ENCODE measurements at regions of chr17 and their contacts with region 1.

Region 1: GRCh38 chr17:17280613-17281549 is at the start of gene COPS3:
- DNase-seq: peak; percentile 89 to 98 (median 95)
- ATAC-seq: peak; percentile 93
- H3K4me3 ChIP-seq: peak within 1 kb of the TSS; percentile 67
- H3K4me3 Mint-ChIP-seq: peak within 1 kb of the TSS; percentile 87 to 98 (median 94)
- H3K27ac ChIP-seq: peak within 1 kb of the TSS; percentile 95
- H3K27ac Mint-ChIP-seq: peak within 1 kb of the TSS; percentile 91 to 98 (median 94)
- H3K4me1 ChIP-seq: peaks cover 17 to 24% of the 10 kb centered on the region in 2 donors
- H3K4me1 Mint-ChIP-seq: peaks cover 22 to 48% (median 44%) of the 10 kb centered on the region in 7 donors
- H3K27me3 ChIP-seq: no peaks in the 10 kb centered on the region
- H3K27me3 Mint-ChIP-seq: peaks cover 0 to 4% (median 0%) of the 10 kb centered on the region in 5 donors
- total RNA-seq, gene COPS3: 44.7 to 98.7 (median 69.4) TPM

Region 2: GRCh38 chr17:16438557-16439302 is 842.2 kb before region 1 on chr17:
- CTCF ChIA-PET with region 1: no interaction called
- POLR2A ChIA-PET with region 1: no interaction called
- intact Hi-C with region 1: loop called in 1 of 2 experiments (anchors 10 kb)
- DNase-seq: peak; percentile 81 to 97 (median 95)
- ATAC-seq: peak; percentile 93
- H3K4me3 ChIP-seq: peak overlapping the region; percentile 89
- H3K4me3 Mint-ChIP-seq: peak overlapping the region; percentile 91 to 100 (median 100)
- H3K27ac ChIP-seq: peak overlapping the region; percentile 92
- H3K27ac Mint-ChIP-seq: peak overlapping the region; percentile 91 to 100 (median 99)
- H3K4me1 ChIP-seq: peaks cover 27 to 41% of the 10 kb centered on the region in 2 donors
- H3K4me1 Mint-ChIP-seq: peaks cover 30 to 55% (median 47%) of the 10 kb centered on the region in 7 donors
- H3K27me3 ChIP-seq: no peaks in the 10 kb centered on the region
- H3K27me3 Mint-ChIP-seq: no peaks in the 10 kb centered on the region

Region 3: GRCh38 chr17:17168401-17168800 is 112.5 kb before region 1 on chr17:
- CTCF ChIA-PET with region 1: no interaction called
- POLR2A ChIA-PET with region 1: no interaction called
- intact Hi-C with region 1: no loop called
- DNase-seq: no peak
- ATAC-seq: no peak
- H3K4me3 ChIP-seq: no peak overlapping the region
- H3K4me3 Mint-ChIP-seq: no peak overlapping the region
- H3K27ac ChIP-seq: no peak overlapping the region
- H3K27ac Mint-ChIP-seq: peak overlapping the region in 7 of 9 donors; percentile 46 to 83 (median 55)
- H3K4me1 ChIP-seq: peaks cover 12 to 28% of the 10 kb centered on the region in 2 donors
- H3K4me1 Mint-ChIP-seq: peaks cover 21 to 59% (median 40%) of the 10 kb centered on the region in 7 donors
- H3K27me3 ChIP-seq: no peaks in the 10 kb centered on the region
- H3K27me3 Mint-ChIP-seq: no peaks in the 10 kb centered on the region

Region 4: GRCh38 chr17:17179371-17179827 is 101.5 kb before region 1 on chr17:
- CTCF ChIA-PET with region 1: no interaction called
- POLR2A ChIA-PET with region 1: interaction called, 4 read pairs
- intact Hi-C with region 1: loop called (anchors 2 kb)
- DNase-seq: peak in 7 of 9 donors; percentile 25 to 59 (median 45)
- ATAC-seq: peak; percentile 63
- H3K4me3 ChIP-seq: peak overlapping the region; percentile 68
- H3K4me3 Mint-ChIP-seq: peak overlapping the region; percentile 73 to 95 (median 84)
- H3K27ac ChIP-seq: peak overlapping the region; percentile 70
- H3K27ac Mint-ChIP-seq: peak overlapping the region; percentile 94 to 100 (median 99)
- H3K4me1 ChIP-seq: peaks cover 61 to 98% of the 10 kb centered on the region in 2 donors
- H3K4me1 Mint-ChIP-seq: peaks cover 46 to 94% (median 82%) of the 10 kb centered on the region in 7 donors
- H3K27me3 ChIP-seq: no peaks in the 10 kb centered on the region
- H3K27me3 Mint-ChIP-seq: no peaks in the 10 kb centered on the region

Region 5: GRCh38 chr17:17206124-17206912 is 74.6 kb before region 1 on chr17 and contains the start of gene PLD6:
- CTCF ChIA-PET with region 1: no interaction called
- POLR2A ChIA-PET with region 1: no interaction called
- intact Hi-C with region 1: loop called in 1 of 2 experiments (anchors 1 kb)
- DNase-seq: peak; percentile 88 to 96 (median 93)
- ATAC-seq: peak; percentile 92
- H3K4me3 ChIP-seq: peak within 1 kb of the TSS; percentile 68
- H3K4me3 Mint-ChIP-seq: peak within 1 kb of the TSS; percentile 87 to 93 (median 89)
- H3K27ac ChIP-seq: peak within 1 kb of the TSS; percentile 70
- H3K27ac Mint-ChIP-seq: peak within 1 kb of the TSS; percentile 75 to 96 (median 91)
- H3K4me1 ChIP-seq: peaks cover 17 to 30% of the 10 kb centered on the region in 2 donors
- H3K4me1 Mint-ChIP-seq: peaks cover 12 to 32% (median 19%) of the 10 kb centered on the region in 7 donors
- H3K27me3 ChIP-seq: no peaks in the 10 kb centered on the region
- H3K27me3 Mint-ChIP-seq: no peaks in the 10 kb centered on the region
- total RNA-seq, gene PLD6: 6.2 to 13.9 (median 12.1) TPM

Region 6: DNA sequence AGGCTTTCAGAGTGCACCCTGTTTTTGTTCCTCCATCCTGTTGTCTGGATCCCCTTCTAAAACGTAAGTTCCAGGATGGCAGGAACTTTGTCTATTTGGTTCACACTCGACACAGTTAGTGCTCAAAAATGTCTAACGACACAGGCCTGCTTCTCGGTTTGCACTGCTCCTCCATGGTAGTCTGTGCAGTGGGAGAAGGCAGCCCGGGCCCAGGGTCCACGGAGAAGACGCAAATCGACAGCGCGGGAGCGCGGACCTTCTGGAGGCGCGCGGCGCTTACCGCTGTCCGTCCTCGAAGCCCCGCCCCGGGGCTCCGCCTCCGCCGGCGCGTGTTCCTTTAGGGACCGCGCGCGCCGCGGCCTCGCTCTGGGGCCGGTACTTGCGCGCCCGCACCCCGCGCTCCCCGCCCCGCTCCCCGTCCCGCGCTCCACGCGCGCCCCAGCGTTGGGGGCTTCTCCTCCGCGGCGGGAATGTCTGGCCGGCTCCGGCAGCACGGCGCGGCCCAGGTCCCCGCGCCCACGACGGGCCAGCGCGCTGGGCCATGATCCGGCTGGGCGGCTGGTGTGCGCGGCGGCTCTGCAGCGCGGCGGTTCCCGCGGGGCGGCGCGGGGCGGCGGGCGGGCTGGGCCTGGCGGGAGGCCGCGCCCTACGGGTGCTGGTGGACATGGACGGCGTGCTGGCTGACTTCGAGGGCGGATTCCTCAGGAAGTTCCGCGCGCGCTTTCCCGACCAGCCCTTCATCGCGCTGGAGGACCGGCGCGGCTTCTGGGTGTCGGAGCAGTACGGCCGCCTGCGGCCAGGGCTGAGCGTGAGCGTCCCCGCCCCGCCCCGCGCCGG is 22.3 kb after region 1 on chr17 and contains the start of gene NT5M:
- CTCF ChIA-PET with region 1: interaction called, 4 read pairs
- POLR2A ChIA-PET with region 1: interaction called, 7 read pairs
- intact Hi-C with region 1: loop called (anchors 1 kb)
- DNase-seq: peak; percentile 33 to 84 (median 56)
- ATAC-seq: peak; percentile 77
- H3K4me3 ChIP-seq: peak within 1 kb of the TSS; percentile 58
- H3K4me3 Mint-ChIP-seq: peak within 1 kb of the TSS; percentile 82 to 96 (median 90)
- H3K27ac ChIP-seq: peak within 1 kb of the TSS; percentile 67
- H3K27ac Mint-ChIP-seq: peak within 1 kb of the TSS; percentile 53 to 93 (median 84)
- H3K4me1 ChIP-seq: peaks cover 12 to 33% of the 10 kb centered on the region in 2 donors
- H3K4me1 Mint-ChIP-seq: peaks cover 16 to 49% (median 37%) of the 10 kb centered on the region in 7 donors
- H3K27me3 ChIP-seq: no peaks in the 10 kb centered on the region
- H3K27me3 Mint-ChIP-seq: no peaks in the 10 kb centered on the region
- total RNA-seq, gene NT5M: 2.9 to 6.3 (median 3.5) TPM

Region 7: GRCh38 chr17:17445925-17446665 is 165.2 kb after region 1 on chr17:
- CTCF ChIA-PET with region 1: no interaction called
- POLR2A ChIA-PET with region 1: no interaction called
- intact Hi-C with region 1: no loop called
- DNase-seq: no peak
- ATAC-seq: no peak
- H3K4me3 ChIP-seq: no peak overlapping the region
- H3K4me3 Mint-ChIP-seq: no peak overlapping the region
- H3K27ac ChIP-seq: no peak overlapping the region
- H3K27ac Mint-ChIP-seq: no peak overlapping the region
- H3K4me1 ChIP-seq: no peaks in the 10 kb centered on the region
- H3K4me1 Mint-ChIP-seq: no peaks in the 10 kb centered on the region
- H3K27me3 ChIP-seq: no peaks in the 10 kb centered on the region
- H3K27me3 Mint-ChIP-seq: peaks cover 0 to 3% (median 0%) of the 10 kb centered on the region in 5 donors

Region 8: GRCh38 chr17:17476865-17477467 is 196.1 kb after region 1 on chr17 and contains the start of gene MED9:
- CTCF ChIA-PET with region 1: no interaction called
- POLR2A ChIA-PET with region 1: no interaction called
- intact Hi-C with region 1: loop called in 1 of 2 experiments (anchors 1 kb)
- DNase-seq: peak; percentile 90 to 98 (median 94)
- ATAC-seq: peak; percentile 100
- H3K4me3 ChIP-seq: peak within 1 kb of the TSS; percentile 98
- H3K4me3 Mint-ChIP-seq: peak within 1 kb of the TSS; percentile 85 to 92 (median 92)
- H3K27ac ChIP-seq: peak within 1 kb of the TSS; percentile 87
- H3K27ac Mint-ChIP-seq: peak within 1 kb of the TSS; percentile 72 to 95 (median 92)
- H3K4me1 ChIP-seq: peaks cover 10 to 29% of the 10 kb centered on the region in 2 donors
- H3K4me1 Mint-ChIP-seq: peaks cover 20 to 58% (median 49%) of the 10 kb centered on the region in 7 donors
- H3K27me3 ChIP-seq: no peaks in the 10 kb centered on the region
- H3K27me3 Mint-ChIP-seq: peaks cover 0 to 11% (median 0%) of the 10 kb centered on the region in 5 donors
- total RNA-seq, gene MED9: 14.0 to 24.1 (median 17.2) TPM

Region 9: GRCh38 chr17:18183334-18184142 is 902.7 kb after region 1 on chr17 and contains the start of gene ALKBH5:
- CTCF ChIA-PET with region 1: no interaction called
- POLR2A ChIA-PET with region 1: no interaction called
- intact Hi-C with region 1: loop called in 1 of 2 experiments (anchors 2 kb)
- DNase-seq: peak; percentile 97 to 99 (median 99)
- ATAC-seq: peak; percentile 88
- H3K4me3 ChIP-seq: peak within 1 kb of the TSS; percentile 78
- H3K4me3 Mint-ChIP-seq: peak within 1 kb of the TSS; percentile 83 to 99 (median 94)
- H3K27ac ChIP-seq: peak within 1 kb of the TSS; percentile 93
- H3K27ac Mint-ChIP-seq: peak within 1 kb of the TSS; percentile 96 to 99 (median 98)
- H3K4me1 ChIP-seq: peaks cover 36 to 40% of the 10 kb centered on the region in 2 donors
- H3K4me1 Mint-ChIP-seq: peaks cover 40 to 59% (median 46%) of the 10 kb centered on the region in 7 donors
- H3K27me3 ChIP-seq: no peaks in the 10 kb centered on the region
- H3K27me3 Mint-ChIP-seq: peaks cover 0 to 3% (median 0%) of the 10 kb centered on the region in 5 donors
- total RNA-seq, gene ALKBH5: 97.4 to 135 (median 108) TPM